A673 (cell line): ENCODE measurements at regions of chr12 and their contacts with region 1.

Region 1: GRCh38 chr12:13661005-13661887 is 320.2 kb downstream of the GRIN2B start:
- DNase-seq: peak; percentile 69
- H3K4me3 ChIP-seq: no peak overlapping the region
- H3K27ac ChIP-seq: no peak overlapping the region
- H3K4me1 ChIP-seq: no peaks in the 10 kb centered on the region
- H3K27me3 ChIP-seq: peaks cover 36% of the 10 kb centered on the region
- CTCF ChIP-seq: peak; percentile 80

Region 2: DNA sequence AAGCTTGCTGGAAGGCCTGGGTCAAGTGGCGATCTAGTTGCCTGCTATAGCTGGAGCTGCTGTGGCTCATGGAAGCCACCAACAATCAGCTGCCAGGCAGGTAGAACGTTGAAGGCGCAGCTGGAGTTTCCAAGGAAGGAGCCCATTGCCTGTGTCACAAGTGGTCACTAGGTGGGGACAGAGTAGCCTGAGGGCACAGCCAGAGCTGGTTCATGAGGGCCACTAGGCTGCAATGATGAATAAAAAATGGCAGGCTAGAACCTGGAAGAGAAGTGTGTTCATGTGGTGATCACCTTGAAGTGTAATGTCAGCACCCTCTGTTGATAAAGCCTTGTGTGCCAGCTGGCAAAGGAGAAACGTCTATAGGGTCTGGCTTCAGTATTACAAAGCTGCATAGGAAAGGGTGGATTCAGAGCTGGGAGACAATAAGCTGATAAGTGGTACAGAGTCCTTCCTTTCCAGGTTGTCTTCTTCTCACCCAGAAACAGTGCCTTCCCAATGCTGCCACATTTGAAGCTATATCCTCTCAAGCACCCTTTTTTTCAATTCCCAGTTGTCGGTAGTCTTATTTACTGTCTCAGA is 298.9 kb before region 1 on chr12:
- CTCF ChIA-PET with region 1: interaction called, 6 read pairs
- POLR2A ChIA-PET with region 1: no interaction called
- intact Hi-C with region 1: loop called (anchors 10 kb)
- DNase-seq: peak; percentile 76
- H3K4me3 ChIP-seq: no peak overlapping the region
- H3K27ac ChIP-seq: no peak overlapping the region
- H3K4me1 ChIP-seq: no peaks in the 10 kb centered on the region
- H3K27me3 ChIP-seq: peaks cover 57% of the 10 kb centered on the region
- CTCF ChIP-seq: peak; percentile 96